Heart right ventricle (tissue), 16 donors: ENCODE measurements at regions of chr15 and their contacts with region 1.

Region 1: GRCh38 chr15:78618490-78618934 is 2.3 kb downstream of the CHRNA3 start:
- DNase-seq: peak; percentile 70 to 91
- ATAC-seq: peak; percentile 59 to 87 (median 81)
- H3K4me3 ChIP-seq: no peak overlapping the region
- H3K27ac ChIP-seq: no peak overlapping the region
- H3K4me1 ChIP-seq: peaks cover 3 to 25% (median 18%) of the 10 kb centered on the region in 9 donors
- H3K27me3 ChIP-seq: peaks cover 14 to 51% (median 46%) of the 10 kb centered on the region in 7 donors
- CTCF ChIP-seq: peak; percentile 82 to 91 (median 87)

Region 2: DNA sequence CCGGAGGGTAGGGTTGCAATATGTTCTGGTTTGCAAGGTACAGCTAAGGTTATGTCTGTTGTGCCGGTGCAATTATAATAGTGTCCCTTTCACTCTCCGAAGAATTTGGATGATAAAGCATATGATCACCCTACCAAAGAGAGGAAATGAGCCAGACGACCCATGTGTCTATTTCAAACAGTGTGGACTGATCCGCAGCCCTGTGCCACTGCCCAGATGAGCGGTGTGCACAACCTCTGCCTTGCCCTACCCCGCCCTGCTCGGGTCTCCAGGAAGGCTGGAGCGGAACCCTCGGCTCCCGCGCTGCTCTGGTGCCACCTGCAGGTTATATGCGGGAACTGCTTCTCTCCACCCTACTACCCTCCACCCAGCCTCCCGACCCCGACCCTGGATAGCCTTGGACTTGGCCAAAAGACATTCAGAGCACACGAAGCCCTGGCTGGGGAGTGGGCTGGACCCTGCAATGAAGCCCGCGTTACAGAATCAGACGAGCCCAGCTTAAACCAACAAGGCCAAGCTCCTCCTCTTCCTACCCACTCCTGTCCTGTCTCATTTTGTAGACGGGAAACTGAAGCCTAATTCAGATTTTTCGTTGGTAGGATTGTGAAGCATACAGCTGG is 90.9 kb after region 1 on chr15:
- intact Hi-C with region 1: loop called (anchors 1 to 5 kb)
- DNase-seq: peak; percentile 58 to 71
- ATAC-seq: peak; percentile 83 to 95 (median 92)
- H3K4me3 ChIP-seq: no peak overlapping the region
- H3K27ac ChIP-seq: no peak overlapping the region
- H3K4me1 ChIP-seq: peaks cover 0 to 8% (median 0%) of the 10 kb centered on the region in 9 donors
- H3K27me3 ChIP-seq: peaks cover 0 to 34% (median 11%) of the 10 kb centered on the region in 7 donors
- CTCF ChIP-seq: peak; percentile 80 to 92 (median 89)

Region 3: DNA sequence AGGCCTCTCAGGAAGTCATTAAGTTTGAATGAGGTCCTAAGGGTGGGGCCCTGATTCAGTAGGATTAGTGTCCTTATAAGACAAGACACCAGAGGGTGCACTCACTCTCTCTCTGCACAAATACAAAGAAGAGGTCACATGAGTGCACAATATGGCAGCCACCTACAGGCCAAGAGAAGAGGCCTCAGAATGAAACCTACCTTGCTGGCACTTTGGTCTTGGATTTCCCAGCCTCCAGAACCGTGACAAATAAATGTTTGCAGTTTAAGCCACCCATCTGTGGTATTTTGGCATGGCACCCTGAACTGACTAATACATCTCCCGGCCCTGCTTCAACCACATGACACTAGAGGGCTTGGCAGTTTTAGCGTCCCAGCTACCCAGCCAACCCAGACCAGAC is 96.4 kb after region 1 on chr15:
- intact Hi-C with region 1: loop called in 1 of 10 experiments (anchors 5 kb)
- DNase-seq: no peak
- ATAC-seq: no peak
- H3K4me3 ChIP-seq: no peak overlapping the region
- H3K27ac ChIP-seq: no peak overlapping the region
- H3K4me1 ChIP-seq: no peaks in the 10 kb centered on the region
- H3K27me3 ChIP-seq: peaks cover 0 to 22% (median 2%) of the 10 kb centered on the region in 7 donors
- CTCF ChIP-seq: no peak

Region 4: GRCh38 chr15:78750566-78750965 is 132.1 kb after region 1 on chr15:
- intact Hi-C with region 1: loop called in 3 of 10 experiments (anchors 1 to 5 kb)
- DNase-seq: no peak
- ATAC-seq: peak; percentile 50 to 73 (median 62)
- H3K4me3 ChIP-seq: peak overlapping the region in 6 of 10 donors; percentile 14 to 38 (median 26)
- H3K27ac ChIP-seq: peak overlapping the region in 8 of 10 donors; percentile 38 to 73 (median 63)
- H3K4me1 ChIP-seq: peaks cover 0 to 49% (median 13%) of the 10 kb centered on the region in 9 donors
- H3K27me3 ChIP-seq: no peaks in the 10 kb centered on the region
- CTCF ChIP-seq: no peak